ENCODE measurements at regions of chrX and their contacts with region 1.

Region 1: DNA sequence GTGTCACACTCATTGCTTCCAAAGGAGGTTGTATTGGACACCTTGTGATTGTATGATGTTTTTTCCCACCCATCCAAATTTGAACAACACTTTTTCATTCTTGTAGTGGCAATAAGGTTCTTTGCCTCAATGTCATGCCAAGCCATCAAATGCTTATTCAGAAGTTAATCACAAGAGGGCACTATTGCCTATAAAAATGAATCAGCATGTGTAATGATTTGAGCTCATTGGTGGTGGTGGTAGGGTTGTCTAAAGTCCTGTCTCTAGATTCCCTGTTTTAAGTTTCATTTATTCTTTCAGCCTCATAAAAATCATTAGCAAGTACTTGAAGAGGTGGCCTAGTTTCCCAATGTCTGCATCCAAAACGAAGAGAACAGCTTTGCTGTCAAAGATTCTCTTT is 37.0 kb downstream of the IRS4 start:
- DNase-seq: no peak
- H3K4me3 Mint-ChIP-seq: no peak overlapping the region
- H3K27ac Mint-ChIP-seq: no peak overlapping the region
- H3K4me1 Mint-ChIP-seq: no peaks in the 10 kb centered on the region
- H3K27me3 Mint-ChIP-seq: no peaks in the 10 kb centered on the region

Region 2: GRCh38 chrX:108464604-108465003 is 234.8 kb before region 1 on chrX:
- intact Hi-C with region 1: no loop called
- DNase-seq: no peak
- H3K4me3 Mint-ChIP-seq: no peak overlapping the region
- H3K27ac Mint-ChIP-seq: no peak overlapping the region
- H3K4me1 Mint-ChIP-seq: no peaks in the 10 kb centered on the region
- H3K27me3 Mint-ChIP-seq: no peaks in the 10 kb centered on the region

Region 3: GRCh38 chrX:109384699-109385098 is 685.3 kb after region 1 on chrX:
- intact Hi-C with region 1: loop called (anchors 10 kb)
- DNase-seq: no peak
- H3K4me3 Mint-ChIP-seq: no peak overlapping the region
- H3K27ac Mint-ChIP-seq: no peak overlapping the region
- H3K4me1 Mint-ChIP-seq: no peaks in the 10 kb centered on the region
- H3K27me3 Mint-ChIP-seq: no peaks in the 10 kb centered on the region